ENCODE measurements at regions of chr7 and their contacts with region 1.

Region 1: DNA sequence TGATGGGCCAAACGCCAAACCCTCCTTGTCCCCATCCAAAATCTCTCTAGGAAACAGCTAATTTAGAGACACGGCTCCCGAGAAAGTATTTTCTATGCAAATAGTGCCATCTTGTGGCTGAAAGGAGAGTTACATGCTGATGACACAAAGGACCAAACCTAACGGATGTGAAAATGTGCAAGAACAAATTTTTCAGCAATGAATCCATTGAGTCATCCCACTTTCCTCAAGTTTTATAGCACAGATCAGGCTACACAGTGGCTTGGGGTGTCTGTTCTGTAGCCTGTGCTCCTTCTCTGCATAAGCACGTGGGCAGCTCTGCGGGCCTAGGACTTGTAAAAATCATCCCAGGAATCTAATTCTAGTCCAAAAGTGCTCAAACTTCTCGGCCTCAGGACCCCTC is 154.8 kb upstream of the PRR15 start:
- DNase-seq: peak; percentile 55 to 77
- H3K4me3 ChIP-seq: no peak overlapping the region
- H3K27ac ChIP-seq: no peak overlapping the region
- H3K4me1 ChIP-seq: peaks cover 19% of the 10 kb centered on the region
- H3K27me3 ChIP-seq: peaks cover 4% of the 10 kb centered on the region; the same call in 1 of the 2 replicates
- CTCF ChIP-seq: peak; percentile 99

Region 2: DNA sequence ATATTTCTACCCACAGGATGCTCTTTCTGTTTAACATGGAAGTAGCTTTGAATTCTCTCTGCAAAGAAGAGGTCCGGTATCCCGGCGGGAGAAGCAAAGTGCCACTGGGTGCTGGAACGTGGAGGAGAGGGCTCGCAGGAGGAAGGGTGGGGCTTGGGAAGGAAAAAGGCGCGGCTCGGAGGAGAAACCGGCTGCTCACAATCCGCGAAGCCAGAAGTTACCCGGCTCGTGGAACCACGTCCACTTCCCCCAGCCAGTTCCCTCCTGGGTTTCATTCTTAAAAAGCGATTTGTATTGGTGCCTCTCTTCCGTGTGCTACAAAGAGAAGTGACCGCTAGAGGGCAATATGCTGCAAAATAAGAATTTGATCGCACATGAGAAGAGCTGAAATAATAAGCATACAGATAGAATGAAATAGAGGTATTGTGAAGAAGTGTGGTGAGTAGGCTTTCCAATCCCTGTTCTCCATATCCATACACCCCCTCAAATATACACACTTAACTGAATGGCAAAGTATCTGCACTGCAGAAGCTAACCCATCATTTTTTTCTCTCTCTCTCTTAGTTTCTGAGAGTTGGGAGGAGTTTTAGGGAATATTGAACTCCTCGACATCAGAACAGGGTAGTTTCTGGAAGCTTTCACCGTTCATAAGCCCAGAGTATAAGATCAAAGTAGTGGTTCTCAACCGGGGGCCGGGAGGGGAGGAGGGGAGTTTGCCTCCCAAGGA is 481.8 kb before region 1 on chr7:
- CTCF ChIA-PET with region 1: interaction called, 14 read pairs
- POLR2A ChIA-PET with region 1: no interaction called
- intact Hi-C with region 1: loop called (anchors 1 kb)
- DNase-seq: peak; percentile 45 to 82
- H3K4me3 ChIP-seq: peak overlapping the region; percentile 54
- H3K27ac ChIP-seq: no peak overlapping the region
- H3K4me1 ChIP-seq: peaks cover 13% of the 10 kb centered on the region; the same call in 1 of the 2 replicates
- H3K27me3 ChIP-seq: no peaks in the 10 kb centered on the region
- CTCF ChIP-seq: peak; percentile 97

Region 3: GRCh38 chr7:29105752-29106668 is 302.8 kb before region 1 on chr7:
- CTCF ChIA-PET with region 1: no interaction called
- POLR2A ChIA-PET with region 1: no interaction called
- intact Hi-C with region 1: loop called (anchors 10 kb)
- DNase-seq: peak; percentile 10 to 58
- H3K4me3 ChIP-seq: no peak overlapping the region
- H3K27ac ChIP-seq: peak overlapping the region; percentile 3; the same call in 1 of the 2 replicates
- H3K4me1 ChIP-seq: peaks cover 42% of the 10 kb centered on the region
- H3K27me3 ChIP-seq: no peaks in the 10 kb centered on the region
- CTCF ChIP-seq: peak; percentile 88

Region 4: GRCh38 chr7:29189743-29190201 is 219.1 kb before region 1 on chr7:
- CTCF ChIA-PET with region 1: interaction called, 3 read pairs
- POLR2A ChIA-PET with region 1: no interaction called
- intact Hi-C with region 1: loop called (anchors 2 kb)
- DNase-seq: peak in 1 of 2 experiments; percentile 35
- H3K4me3 ChIP-seq: no peak overlapping the region
- H3K27ac ChIP-seq: peak overlapping the region; percentile 61
- H3K4me1 ChIP-seq: peaks cover 47% of the 10 kb centered on the region
- H3K27me3 ChIP-seq: no peaks in the 10 kb centered on the region
- CTCF ChIP-seq: peak; percentile 77

Region 5: DNA sequence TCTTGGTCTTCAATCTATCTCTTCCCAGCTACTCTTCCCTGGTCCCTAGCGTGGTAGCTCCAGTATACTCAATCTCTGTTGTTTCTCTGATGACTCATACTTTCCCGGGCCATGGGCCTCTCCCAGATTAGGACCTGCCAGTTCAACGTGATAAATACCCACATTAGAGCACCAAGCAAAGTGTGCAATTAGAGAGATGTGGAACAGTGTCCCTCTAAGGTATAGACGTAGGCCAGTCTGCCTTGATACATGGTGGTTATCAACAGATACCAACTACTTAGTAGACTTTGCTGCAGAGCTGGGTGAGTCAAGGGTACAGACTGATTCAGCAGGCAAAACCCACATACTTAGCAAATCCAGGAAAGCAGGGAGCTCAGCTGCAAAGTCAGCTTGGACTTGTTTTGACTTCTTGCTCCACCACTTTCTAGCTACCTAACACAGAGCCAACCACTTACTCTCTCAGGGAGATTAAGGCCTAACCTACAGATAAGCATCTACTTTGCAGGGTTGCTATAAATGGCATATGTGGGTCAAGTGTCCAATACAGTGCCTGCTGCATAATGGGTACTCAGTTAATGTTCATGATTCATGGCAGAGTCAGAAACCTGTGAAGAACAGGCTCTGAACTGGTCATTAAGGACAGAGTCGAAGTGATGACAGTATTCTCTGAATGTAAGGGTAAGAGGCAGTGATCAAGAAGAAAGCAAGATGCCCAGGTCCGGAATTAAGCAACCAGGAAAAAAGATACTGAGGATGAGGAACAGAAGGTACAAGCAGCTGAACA is 38.1 kb before region 1 on chr7:
- CTCF ChIA-PET with region 1: no interaction called
- POLR2A ChIA-PET with region 1: no interaction called
- intact Hi-C with region 1: no loop called
- DNase-seq: peak in 1 of 2 experiments; percentile 94
- H3K4me3 ChIP-seq: no peak overlapping the region
- H3K27ac ChIP-seq: peak overlapping the region; percentile 68
- H3K4me1 ChIP-seq: peaks cover 43% of the 10 kb centered on the region
- H3K27me3 ChIP-seq: no peaks in the 10 kb centered on the region
- CTCF ChIP-seq: no peak

Region 6: DNA sequence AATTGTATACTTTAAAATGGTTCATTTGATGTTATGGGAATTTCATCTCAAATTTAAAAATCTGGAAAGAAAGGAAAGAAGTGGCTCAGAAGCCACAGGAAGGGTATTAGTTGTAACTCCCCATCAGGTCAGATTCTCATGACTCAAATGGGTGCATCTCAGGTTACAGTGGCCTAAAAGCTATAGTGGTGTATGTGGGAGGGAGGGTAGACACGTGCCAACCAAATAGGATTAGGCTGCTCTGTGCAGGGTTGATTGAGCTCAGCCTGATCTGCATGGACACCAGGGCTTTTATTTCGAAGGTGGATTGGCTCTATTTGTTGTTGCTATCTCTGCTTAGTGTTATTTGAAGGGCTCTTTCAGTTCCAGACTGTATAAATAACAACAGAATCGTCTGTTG is 33.3 kb after region 1 on chr7:
- CTCF ChIA-PET with region 1: no interaction called
- POLR2A ChIA-PET with region 1: no interaction called
- intact Hi-C with region 1: no loop called
- DNase-seq: peak in 1 of 2 experiments; percentile 63
- H3K4me3 ChIP-seq: no peak overlapping the region
- H3K27ac ChIP-seq: no peak overlapping the region
- H3K4me1 ChIP-seq: peaks cover 23% of the 10 kb centered on the region
- H3K27me3 ChIP-seq: no peaks in the 10 kb centered on the region
- CTCF ChIP-seq: no peak

Region 7: GRCh38 chr7:29574659-29575058 is 165.8 kb after region 1 on chr7:
- CTCF ChIA-PET with region 1: no interaction called
- POLR2A ChIA-PET with region 1: no interaction called
- intact Hi-C with region 1: no loop called
- DNase-seq: no peak
- H3K4me3 ChIP-seq: no peak overlapping the region
- H3K27ac ChIP-seq: no peak overlapping the region
- H3K4me1 ChIP-seq: peaks cover 5% of the 10 kb centered on the region
- H3K27me3 ChIP-seq: no peaks in the 10 kb centered on the region
- CTCF ChIP-seq: no peak

Measured in PC-9 (cell line).